Ovary (tissue), 10 donors: ENCODE measurements at regions of chr22 and their contacts with region 1.

Region 1: DNA sequence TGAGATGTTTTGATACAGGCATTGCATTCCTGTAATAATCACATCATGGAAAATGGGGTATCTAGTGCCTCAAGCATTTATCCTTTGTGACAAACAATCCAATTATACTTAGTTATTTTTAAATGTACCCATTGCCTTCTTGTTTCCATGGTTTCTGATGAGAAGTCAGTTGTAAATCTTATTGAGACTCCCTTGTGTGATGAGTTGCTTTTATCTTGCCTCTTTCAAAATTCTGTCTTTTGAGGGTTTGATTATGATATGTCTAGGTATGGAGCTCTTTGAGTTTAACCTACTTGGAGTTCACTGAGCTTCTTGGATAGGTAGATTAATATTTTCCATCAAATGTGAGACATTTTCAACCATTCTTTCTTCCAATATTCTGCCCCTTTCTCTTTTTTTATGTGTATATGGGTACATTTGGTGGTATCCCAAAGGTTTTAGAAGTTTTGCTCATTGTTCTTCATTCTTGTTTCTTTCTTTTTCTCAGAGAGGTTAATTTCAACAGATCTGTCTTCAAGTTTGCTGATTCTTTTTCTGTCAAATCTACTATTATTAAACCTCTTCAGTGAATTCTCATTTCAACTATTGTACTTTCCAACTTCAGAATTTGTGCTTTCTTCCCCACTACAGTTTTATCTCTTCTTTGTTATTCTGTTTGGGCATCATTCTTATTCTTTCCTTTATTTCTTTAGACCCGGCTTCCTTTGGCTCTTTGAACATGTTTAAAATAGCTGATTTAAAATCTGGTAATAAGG is 13.7 kb downstream of the NAGA start:
- DNase-seq: no peak
- H3K4me3 ChIP-seq: no peak overlapping the region
- H3K27ac ChIP-seq: no peak overlapping the region
- H3K4me1 ChIP-seq: no peaks in the 10 kb centered on the region
- H3K27me3 ChIP-seq: no peaks in the 10 kb centered on the region
- CTCF ChIP-seq: no peak
- EP300 ChIP-seq: no peak
- POLR2A ChIP-seq: no peak

Region 2: GRCh38 chr22:42010778-42011177 is 46.2 kb before region 1 on chr22:
- intact Hi-C with region 1: loop called in 1 of 4 experiments (anchors 5 kb)
- DNase-seq: no peak
- H3K4me3 ChIP-seq: no peak overlapping the region
- H3K27ac ChIP-seq: no peak overlapping the region
- H3K4me1 ChIP-seq: no peaks in the 10 kb centered on the region
- H3K27me3 ChIP-seq: no peaks in the 10 kb centered on the region
- CTCF ChIP-seq: no peak
- EP300 ChIP-seq: no peak
- POLR2A ChIP-seq: no peak

Region 3: GRCh38 chr22:42101199-42101598 is 44.3 kb after region 1 on chr22:
- intact Hi-C with region 1: no loop called
- DNase-seq: no peak
- H3K4me3 ChIP-seq: no peak overlapping the region
- H3K27ac ChIP-seq: no peak overlapping the region
- H3K4me1 ChIP-seq: no peaks in the 10 kb centered on the region
- H3K27me3 ChIP-seq: no peaks in the 10 kb centered on the region
- CTCF ChIP-seq: no peak
- EP300 ChIP-seq: no peak
- POLR2A ChIP-seq: no peak

Region 4: DNA sequence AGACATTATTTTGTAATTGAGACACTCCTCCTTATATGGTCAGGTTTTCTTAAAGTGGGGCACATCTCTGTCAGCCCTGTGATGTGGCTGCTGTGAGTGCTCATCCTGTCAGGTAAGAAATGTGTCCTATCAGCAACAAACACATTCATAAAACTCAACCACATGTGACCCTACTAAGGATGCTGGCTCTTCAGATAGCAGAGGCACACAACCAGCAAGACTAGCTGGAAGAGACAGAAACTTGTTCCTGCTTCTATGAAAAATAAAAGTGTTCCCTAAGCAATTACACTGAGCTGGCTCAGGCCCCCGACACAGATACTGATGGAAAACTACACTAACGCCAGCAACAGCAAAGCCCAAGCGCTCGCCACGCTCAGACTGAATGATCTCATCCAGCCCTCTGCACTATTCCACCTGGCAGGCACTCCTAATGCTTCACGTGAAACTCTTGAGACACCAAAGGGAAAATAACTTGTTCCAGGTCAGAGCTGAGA is 123.5 kb after region 1 on chr22:
- intact Hi-C with region 1: no loop called
- DNase-seq: peak; percentile 32 to 63 (median 41)
- H3K4me3 ChIP-seq: no peak overlapping the region
- H3K27ac ChIP-seq: no peak overlapping the region
- H3K4me1 ChIP-seq: no peaks in the 10 kb centered on the region
- H3K27me3 ChIP-seq: no peaks in the 10 kb centered on the region
- CTCF ChIP-seq: no peak
- EP300 ChIP-seq: no peak
- POLR2A ChIP-seq: no peak